K562 (cell line): ENCODE measurements at regions of chr5 and their contacts with region 1.

Region 1: GRCh38 chr5:80672140-80672736 is 17.5 kb upstream of the DHFR start:
- DNase-seq: peak; percentile 56 to 82 (median 63)
- ATAC-seq: peak; percentile 95
- H3K4me3 ChIP-seq: no peak overlapping the region
- H3K27ac ChIP-seq: no peak overlapping the region
- H3K4me1 ChIP-seq: peaks cover 0 to 5% of the 10 kb centered on the region in 2 experiments; a peak in 1 of 5 replicates
- H3K27me3 ChIP-seq: no peaks in the 10 kb centered on the region
- CTCF ChIP-seq: peak; percentile 69 to 80 (median 73)
- EP300 ChIP-seq: no peak
- POLR2A ChIP-seq: no peak
- RAD21 ChIP-seq: peak; percentile 74 to 76

Region 2: DNA sequence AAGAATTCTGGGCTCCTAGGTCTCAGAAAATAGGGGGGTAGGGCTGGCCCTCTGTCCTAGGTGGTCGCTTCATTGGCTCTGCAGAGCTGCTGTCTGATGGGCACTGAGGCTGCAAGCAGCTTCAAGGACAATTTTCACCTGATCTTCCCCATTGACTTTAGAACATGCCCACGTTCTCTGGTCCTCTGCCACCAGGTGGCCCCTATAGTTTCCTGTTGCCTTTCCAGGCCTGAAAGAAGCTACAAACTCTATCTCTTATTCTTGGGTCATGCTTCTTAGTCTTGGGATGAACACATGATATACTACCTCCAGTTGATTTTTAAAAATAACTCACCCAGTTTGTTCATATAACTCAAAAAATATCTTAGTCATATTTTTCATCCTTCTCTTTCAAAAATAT is 326.2 kb before region 1 on chr5:
- CTCF ChIA-PET with region 1: no interaction called
- POLR2A ChIA-PET with region 1: no interaction called
- in situ Hi-C with region 1: no loop called
- intact Hi-C with region 1: loop called (anchors 5 kb)
- DNase-seq: peak in 3 of 4 experiments; percentile 14 to 57 (median 32)
- ATAC-seq: peak; percentile 89
- H3K4me3 ChIP-seq: no peak overlapping the region
- H3K27ac ChIP-seq: no peak overlapping the region
- H3K4me1 ChIP-seq: peaks cover under 1 to 3% of the 10 kb centered on the region in 2 experiments; a peak in 2 of 5 replicates
- H3K27me3 ChIP-seq: no peaks in the 10 kb centered on the region; a peak in 1 of 5 replicates
- CTCF ChIP-seq: peak; percentile 59 to 68 (median 64)
- EP300 ChIP-seq: no peak
- POLR2A ChIP-seq: no peak
- RAD21 ChIP-seq: peak; percentile 58 to 72

Region 3: GRCh38 chr5:80481019-80481893 is 191.0 kb before region 1 on chr5:
- CTCF ChIA-PET with region 1: no interaction called
- POLR2A ChIA-PET with region 1: no interaction called
- in situ Hi-C with region 1: no loop called
- intact Hi-C with region 1: loop called (anchors 1 kb)
- DNase-seq: peak; percentile 37 to 63 (median 48)
- ATAC-seq: peak; percentile 99
- H3K4me3 ChIP-seq: no peak overlapping the region
- H3K27ac ChIP-seq: no peak overlapping the region
- H3K4me1 ChIP-seq: no peaks in the 10 kb centered on the region
- H3K27me3 ChIP-seq: 0 out of 5 replicates have a peak, but pooled peaks cover 0 to 5% of the 10 kb centered on the region in 2 experiments
- CTCF ChIP-seq: peak; percentile 74 to 83 (median 77)
- EP300 ChIP-seq: no peak
- POLR2A ChIP-seq: no peak
- RAD21 ChIP-seq: peak in 1 of 2 experiments; percentile 67; a peak in 2 of 4 replicates

Region 4: DNA sequence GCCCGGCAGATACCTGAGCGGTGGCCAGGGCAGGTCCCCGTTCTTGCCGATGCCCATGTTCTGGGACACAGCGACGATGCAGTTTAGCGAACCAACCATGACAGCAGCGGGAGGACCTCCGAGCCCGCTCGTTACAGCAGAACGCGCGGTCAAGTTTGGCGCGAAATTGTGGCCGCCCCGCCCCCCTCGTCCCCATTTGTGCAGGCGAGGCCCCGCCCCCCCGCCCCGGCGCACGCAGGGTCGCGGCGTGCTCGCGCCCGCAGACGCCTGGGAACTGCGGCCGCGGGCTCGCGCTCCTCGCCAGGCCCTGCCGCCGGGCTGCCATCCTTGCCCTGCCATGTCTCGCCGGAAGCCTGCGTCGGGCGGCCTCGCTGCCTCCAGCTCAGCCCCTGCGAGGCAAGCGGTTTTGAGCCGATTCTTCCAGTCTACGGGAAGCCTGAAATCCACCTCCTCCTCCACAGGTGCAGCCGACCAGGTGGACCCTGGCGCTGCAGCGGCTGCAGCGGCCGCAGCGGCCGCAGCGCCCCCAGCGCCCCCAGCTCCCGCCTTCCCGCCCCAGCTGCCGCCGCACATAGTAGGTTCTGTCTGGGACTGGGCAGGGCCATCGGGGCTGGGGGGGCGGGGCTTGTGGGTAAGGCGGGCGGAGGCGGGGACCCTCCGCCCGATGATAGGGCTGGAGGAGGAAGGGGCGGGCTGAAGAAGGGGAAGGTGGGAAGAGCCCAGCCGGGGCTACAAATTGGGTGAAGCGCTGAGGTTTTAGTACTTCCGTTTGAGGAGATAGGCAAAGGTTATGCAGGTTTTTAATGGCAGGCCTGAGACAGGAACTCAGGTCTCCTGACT is 17.6 kb before region 1 on chr5 and contains the starts of genes DHFR and MSH3:
- CTCF ChIA-PET with region 1: no interaction called
- POLR2A ChIA-PET with region 1: interaction called, 10 read pairs
- in situ Hi-C with region 1: no loop called
- intact Hi-C with region 1: no loop called
- DNase-seq: peak; percentile 95 to 97 (median 96)
- ATAC-seq: peak; percentile 76
- H3K4me3 ChIP-seq: peak within 1 kb of the TSS; percentile 61
- H3K27ac ChIP-seq: peak within 1 kb of the TSS; percentile 92
- H3K4me1 ChIP-seq: peaks cover 0 to 8% of the 10 kb centered on the region in 2 experiments; a peak in 2 of 5 replicates
- H3K27me3 ChIP-seq: no peaks in the 10 kb centered on the region
- CTCF ChIP-seq: peak in 2 of 3 experiments; percentile 30 to 44; a peak in 3 of 6 replicates
- EP300 ChIP-seq: no peak
- POLR2A ChIP-seq: peak; percentile 90
- RAD21 ChIP-seq: 0 out of 4 replicates have a peak, but pooled peaks of 1 of the 2 experiments have one; percentile 5
- polyA plus RNA-seq, gene DHFR: 45.6 to 80.6 TPM
- polyA plus RNA-seq, gene MSH3: 3.9 to 5.3 TPM

Region 5: DNA sequence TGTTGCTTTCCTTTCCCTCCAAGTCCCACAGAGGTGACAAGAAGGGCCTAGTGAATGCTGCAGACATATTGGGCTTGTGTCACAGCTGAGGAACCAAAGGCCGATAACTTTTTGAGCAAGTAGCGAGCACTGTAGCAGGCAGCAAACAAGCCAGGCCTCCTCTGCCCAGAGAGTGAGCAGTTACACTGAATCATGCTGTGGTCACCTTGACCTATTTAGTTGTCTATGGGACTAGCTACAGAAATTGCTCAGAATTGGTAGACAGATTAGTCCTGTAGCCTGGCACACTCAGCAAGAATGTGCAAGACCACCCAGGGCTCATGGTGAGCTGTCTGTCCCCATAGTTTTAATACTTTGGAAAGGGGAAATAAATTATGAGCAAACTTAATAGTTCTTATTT is 654.3 kb after region 1 on chr5:
- CTCF ChIA-PET with region 1: no interaction called
- POLR2A ChIA-PET with region 1: no interaction called
- in situ Hi-C with region 1: no loop called
- intact Hi-C with region 1: no loop called
- DNase-seq: no peak
- ATAC-seq: no peak
- H3K4me3 ChIP-seq: no peak overlapping the region
- H3K27ac ChIP-seq: no peak overlapping the region
- H3K4me1 ChIP-seq: no peaks in the 10 kb centered on the region; a peak in 1 of 5 replicates
- H3K27me3 ChIP-seq: peaks cover 4 to 15% of the 10 kb centered on the region in 2 experiments; a peak in 3 of 5 replicates
- CTCF ChIP-seq: no peak
- EP300 ChIP-seq: no peak
- POLR2A ChIP-seq: no peak
- RAD21 ChIP-seq: no peak